ENCODE measurements at regions of chr3 and their contacts with region 1.

Region 1: DNA sequence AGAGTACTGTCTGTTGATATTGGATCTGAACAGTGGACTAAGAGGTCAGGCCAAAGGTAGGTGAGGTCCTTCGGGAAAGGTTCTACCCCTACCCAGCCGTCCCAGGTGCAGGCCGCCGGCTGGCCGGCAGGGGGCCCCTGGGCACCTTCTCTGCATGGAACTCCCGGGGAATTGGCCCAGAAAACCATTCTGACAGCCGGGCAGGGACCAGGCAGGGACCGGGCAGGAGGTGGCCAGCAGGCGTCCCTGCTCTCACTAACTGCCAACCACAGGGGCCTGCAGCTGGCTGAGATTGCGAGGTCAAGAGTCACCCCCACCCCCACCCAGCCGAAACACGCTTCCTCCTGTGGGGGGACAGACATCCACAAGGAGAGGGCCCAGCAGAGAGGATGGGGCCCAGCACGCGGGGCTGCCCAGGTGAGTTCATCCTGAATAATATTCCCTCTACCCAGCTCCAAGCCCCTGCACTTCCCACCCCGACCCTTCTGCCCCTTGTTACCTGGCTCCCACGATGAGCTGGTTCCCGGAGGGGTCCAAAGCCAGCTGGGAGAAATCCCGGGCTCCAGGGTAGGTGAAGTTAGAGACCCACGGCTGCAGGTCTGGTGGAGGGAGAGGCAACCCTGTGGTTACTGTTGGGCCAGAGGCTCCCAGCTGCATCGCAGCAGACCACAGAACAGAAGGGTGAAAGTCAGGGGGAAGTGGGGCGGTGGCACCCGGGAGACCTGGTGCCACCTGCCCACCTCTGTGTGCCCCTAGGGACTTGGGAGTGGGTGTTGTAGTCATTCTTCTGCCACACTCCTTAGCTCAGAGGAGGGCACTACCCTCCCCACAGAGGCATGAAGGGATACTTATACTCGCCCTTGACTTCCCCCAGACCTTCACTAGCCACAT is 84.4 kb downstream of the SEMA5B start:
- DNase-seq: peak; percentile 88
- H3K4me3 ChIP-seq: no peak overlapping the region
- H3K27ac ChIP-seq: no peak overlapping the region
- H3K4me1 ChIP-seq: no peaks in the 10 kb centered on the region
- H3K27me3 ChIP-seq: no peaks in the 10 kb centered on the region
- CTCF ChIP-seq: peak; percentile 76 to 97 (median 96)
- POLR2A ChIP-seq: no peak

Region 2: DNA sequence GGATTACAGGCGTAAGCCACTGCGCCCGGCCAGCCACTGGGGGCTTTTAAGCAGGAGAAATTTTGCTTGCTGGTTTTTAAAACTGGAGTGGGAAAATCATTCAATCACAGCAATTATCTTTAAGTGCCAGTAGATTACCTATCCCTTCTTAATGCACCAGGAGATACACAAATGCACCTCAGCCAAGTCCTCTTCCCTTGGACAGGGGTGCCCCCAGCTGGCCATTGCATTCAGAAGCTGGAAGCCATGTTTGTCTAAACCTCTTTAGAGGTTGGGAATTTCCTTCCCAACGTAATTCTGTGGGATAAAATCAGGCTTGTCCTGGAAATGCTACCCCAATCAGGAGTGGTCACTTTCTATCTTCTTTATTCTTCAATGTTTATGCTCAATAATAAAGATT is 586.8 kb before region 1 on chr3:
- intact Hi-C with region 1: no loop called
- DNase-seq: peak; percentile 59 to 64
- H3K4me3 ChIP-seq: no peak overlapping the region
- H3K27ac ChIP-seq: no peak overlapping the region
- H3K4me1 ChIP-seq: no peaks in the 10 kb centered on the region
- H3K27me3 ChIP-seq: no peaks in the 10 kb centered on the region
- CTCF ChIP-seq: peak in 5 of 6 experiments; percentile 13 to 64 (median 48)
- POLR2A ChIP-seq: no peak

Region 3: GRCh38 chr3:122810734-122811133 is 132.4 kb before region 1 on chr3:
- intact Hi-C with region 1: no loop called
- DNase-seq: no peak
- H3K4me3 ChIP-seq: no peak overlapping the region
- H3K27ac ChIP-seq: no peak overlapping the region
- H3K4me1 ChIP-seq: no peaks in the 10 kb centered on the region
- H3K27me3 ChIP-seq: no peaks in the 10 kb centered on the region
- CTCF ChIP-seq: no peak
- POLR2A ChIP-seq: no peak

Region 4: DNA sequence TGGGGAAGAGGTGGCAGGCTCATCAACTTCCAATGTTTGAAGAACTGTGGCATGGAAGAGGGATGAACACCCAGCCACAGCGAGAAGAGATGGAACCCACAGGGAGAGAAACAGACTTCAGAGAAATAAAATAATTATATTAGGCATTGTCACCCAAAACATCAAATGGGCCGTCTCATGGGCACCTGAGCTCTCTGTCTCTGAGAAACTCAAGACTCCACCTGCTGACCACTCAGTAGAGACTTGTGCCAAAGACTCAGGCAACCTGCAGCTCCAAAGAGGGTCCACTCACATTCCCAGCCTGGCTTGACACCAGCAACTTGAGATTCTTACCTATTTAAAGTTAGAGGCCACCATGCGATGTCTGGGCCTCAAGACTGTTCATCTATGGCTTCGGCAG is 72.4 kb after region 1 on chr3:
- intact Hi-C with region 1: no loop called
- DNase-seq: no peak
- H3K4me3 ChIP-seq: no peak overlapping the region
- H3K27ac ChIP-seq: no peak overlapping the region
- H3K4me1 ChIP-seq: peaks cover 0 to 3% of the 10 kb centered on the region in 2 donors
- H3K27me3 ChIP-seq: no peaks in the 10 kb centered on the region
- CTCF ChIP-seq: no peak
- POLR2A ChIP-seq: no peak

Region 5: DNA sequence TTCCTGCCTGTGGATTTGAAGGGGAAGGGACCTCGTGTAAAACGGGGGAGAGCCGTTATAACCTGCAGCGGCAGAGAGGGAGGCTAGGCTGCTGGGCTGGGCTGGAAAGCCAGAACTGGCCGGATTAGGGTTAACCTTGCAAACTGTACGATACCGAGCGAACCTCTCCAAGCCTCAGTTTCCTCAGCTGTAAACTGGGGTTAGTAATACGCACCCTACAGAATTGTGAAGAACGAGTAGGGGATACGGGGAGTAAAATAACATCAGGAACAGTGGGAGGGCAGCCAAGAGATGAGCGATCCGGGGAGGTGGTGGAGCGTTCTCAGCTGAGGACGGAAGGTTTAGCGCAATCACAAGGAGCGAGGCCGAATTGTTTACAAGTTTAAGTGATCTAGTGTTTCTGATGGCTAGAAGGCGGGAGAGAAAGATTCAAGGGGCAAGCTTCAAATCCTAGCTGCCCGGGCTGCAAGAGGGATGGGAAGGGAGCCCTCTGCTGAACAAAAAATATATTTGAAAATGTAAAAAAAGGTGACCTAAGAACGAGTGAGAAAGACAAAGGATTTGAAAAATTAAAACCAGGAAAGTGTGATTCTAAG is 85.1 kb after region 1 on chr3:
- intact Hi-C with region 1: loop called (anchors 5 kb)
- DNase-seq: peak; percentile 38 to 40
- H3K4me3 ChIP-seq: peak overlapping the region; percentile 19 to 38 (median 33)
- H3K27ac ChIP-seq: no peak overlapping the region
- H3K4me1 ChIP-seq: peaks cover 20 to 32% of the 10 kb centered on the region in 2 donors
- H3K27me3 ChIP-seq: peaks cover 4% of the 10 kb centered on the region
- CTCF ChIP-seq: peak in 5 of 6 experiments; percentile 26 to 59 (median 44)
- POLR2A ChIP-seq: no peak

Region 6: DNA sequence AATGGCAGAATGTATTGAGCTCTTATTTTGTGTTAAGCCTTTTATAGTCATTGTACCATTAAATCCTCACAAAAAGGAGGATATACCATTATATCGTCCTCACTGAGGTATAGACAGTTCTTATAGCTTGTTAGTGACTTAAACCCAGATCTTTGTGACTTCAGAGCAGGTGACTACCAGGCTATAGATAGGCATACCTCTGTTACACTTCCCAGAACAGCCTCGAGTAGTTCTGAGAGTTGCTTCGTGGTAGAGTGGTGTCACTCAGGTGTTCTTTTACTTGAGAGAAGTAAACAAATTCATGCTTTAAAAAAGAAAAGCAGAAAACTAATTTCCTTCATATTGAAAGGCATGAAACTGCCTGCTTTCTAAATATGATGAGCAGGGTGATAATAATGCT is 318.5 kb after region 1 on chr3:
- intact Hi-C with region 1: loop called (anchors 5 kb)
- DNase-seq: no peak
- H3K4me3 ChIP-seq: no peak overlapping the region
- H3K27ac ChIP-seq: no peak overlapping the region
- H3K4me1 ChIP-seq: no peaks in the 10 kb centered on the region
- H3K27me3 ChIP-seq: no peaks in the 10 kb centered on the region
- CTCF ChIP-seq: no peak
- POLR2A ChIP-seq: no peak